ENCODE measurements at regions of chr13 and their contacts with region 1.

Region 1: DNA sequence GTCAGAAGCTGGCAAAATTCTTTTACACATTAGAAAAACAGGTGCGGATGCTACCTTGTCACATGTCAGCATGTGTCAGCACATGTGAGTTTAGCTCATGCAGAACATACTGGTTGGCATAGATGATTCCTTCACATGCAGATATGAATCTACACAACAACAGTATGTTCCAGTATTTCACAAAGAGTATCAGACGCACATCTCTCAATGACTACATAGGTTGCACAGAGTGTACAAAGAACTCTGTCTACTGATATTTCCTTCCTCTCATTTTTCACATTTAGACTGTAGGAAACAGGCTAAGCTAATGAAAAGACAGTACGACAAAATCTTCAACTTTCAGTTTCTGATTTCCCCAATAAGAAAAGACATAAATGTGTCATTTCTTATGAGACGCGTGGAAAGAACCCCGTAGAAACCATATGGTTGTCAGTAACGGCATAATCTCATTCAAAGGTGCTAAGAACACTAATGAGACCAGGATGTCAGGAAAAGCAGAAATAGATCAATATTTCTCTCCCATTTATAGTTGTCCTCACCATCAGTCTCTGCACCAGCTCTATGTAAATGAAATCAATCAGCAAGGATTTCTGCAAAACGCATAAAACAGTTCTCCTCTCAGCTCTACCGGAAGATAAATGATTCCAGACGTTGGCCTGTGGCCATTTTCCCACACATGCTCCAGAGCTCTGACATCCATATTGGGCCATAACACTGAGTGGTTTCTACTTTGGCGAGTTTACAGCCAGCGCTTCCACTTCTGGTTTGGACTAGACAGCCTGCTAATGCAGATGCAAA is 81.2 kb downstream of the STARD13 start:
- DNase-seq: no peak
- H3K4me3 ChIP-seq: peak overlapping the region; percentile 34 to 38
- H3K27ac ChIP-seq: peak overlapping the region; percentile 88
- H3K4me1 ChIP-seq: peaks cover 55% of the 10 kb centered on the region
- H3K27me3 ChIP-seq: no peaks in the 10 kb centered on the region
- CTCF ChIP-seq: no peak
- POLR2A ChIP-seq: no peak

Region 2: DNA sequence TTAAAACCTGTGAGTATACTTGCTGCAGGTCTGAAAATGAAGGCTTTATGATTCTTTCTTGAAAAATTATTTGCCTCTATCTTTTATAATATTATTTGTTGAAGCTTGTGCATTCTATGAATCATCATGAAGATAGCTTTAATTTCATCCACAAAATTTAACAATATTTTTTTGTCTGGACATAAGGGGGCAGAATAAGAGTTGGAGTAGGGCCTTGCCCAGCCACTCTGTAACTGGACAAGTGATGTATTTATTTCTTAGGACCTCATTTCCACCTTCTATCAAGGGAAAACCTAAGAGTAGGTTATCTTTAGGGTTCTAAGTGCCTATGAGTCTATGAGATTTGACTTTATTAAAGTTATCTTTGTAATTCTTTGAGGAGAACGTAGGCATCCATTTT is 826.3 kb before region 1 on chr13:
- intact Hi-C with region 1: no loop called
- DNase-seq: no peak
- H3K4me3 ChIP-seq: no peak overlapping the region
- H3K27ac ChIP-seq: no peak overlapping the region
- H3K4me1 ChIP-seq: no peaks in the 10 kb centered on the region
- H3K27me3 ChIP-seq: no peaks in the 10 kb centered on the region
- CTCF ChIP-seq: no peak
- POLR2A ChIP-seq: no peak

Region 3: GRCh38 chr13:33090755-33091414 is 113.4 kb before region 1 on chr13:
- intact Hi-C with region 1: no loop called
- DNase-seq: no peak
- H3K4me3 ChIP-seq: no peak overlapping the region
- H3K27ac ChIP-seq: no peak overlapping the region
- H3K4me1 ChIP-seq: no peaks in the 10 kb centered on the region
- H3K27me3 ChIP-seq: no peaks in the 10 kb centered on the region
- CTCF ChIP-seq: no peak
- POLR2A ChIP-seq: no peak

Region 4: GRCh38 chr13:33125821-33126570 is 78.3 kb before region 1 on chr13:
- intact Hi-C with region 1: loop called (anchors 10 kb)
- DNase-seq: peak in 1 of 2 donors; percentile 93
- H3K4me3 ChIP-seq: peak overlapping the region in 1 of 2 donors; percentile 24
- H3K27ac ChIP-seq: peak overlapping the region; percentile 79
- H3K4me1 ChIP-seq: peaks cover 57% of the 10 kb centered on the region
- H3K27me3 ChIP-seq: no peaks in the 10 kb centered on the region
- CTCF ChIP-seq: no peak
- POLR2A ChIP-seq: no peak

Measured in vagina (tissue), 2 donors.